ENCODE measurements at regions of chr6 and their contacts with region 1.

Region 1: DNA sequence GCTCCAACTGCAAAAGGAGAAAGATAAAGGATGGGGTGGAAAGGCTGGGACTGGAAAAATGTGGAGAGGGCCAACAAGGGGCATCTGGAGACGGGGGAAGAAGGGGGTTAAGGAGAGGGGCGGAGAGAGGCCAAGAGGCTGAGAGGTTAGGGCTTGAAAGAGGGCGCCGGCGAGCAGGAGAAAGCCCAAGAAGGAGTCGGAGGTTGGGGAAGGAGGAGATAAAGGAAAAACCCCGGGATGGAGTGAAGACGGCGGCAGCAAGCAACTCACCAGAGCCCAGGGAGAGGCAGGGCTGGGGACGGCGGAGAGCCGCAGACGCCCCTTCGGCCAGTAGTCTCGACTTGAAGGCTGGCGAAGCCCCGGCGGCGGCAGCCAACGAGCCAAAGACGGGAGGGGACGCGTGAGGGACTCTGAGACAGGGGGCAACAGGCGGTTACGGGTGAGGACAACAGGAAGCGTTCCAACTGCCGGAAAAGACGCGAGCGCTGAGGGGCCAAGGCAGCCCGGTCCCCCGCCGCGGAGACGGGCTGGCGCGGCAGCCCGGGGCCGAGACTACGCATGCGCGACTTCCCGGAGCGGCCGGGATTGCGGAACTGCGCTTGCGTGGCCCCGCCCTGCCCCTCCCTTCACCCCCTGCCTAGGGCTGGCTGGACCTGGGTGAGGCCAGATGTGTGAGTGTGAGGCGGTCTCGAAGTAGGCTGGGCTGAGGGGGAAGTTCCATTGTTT is at the start of gene STK38:
- DNase-seq: peak; percentile 94
- ATAC-seq: peak; percentile 90
- H3K4me3 Mint-ChIP-seq: peak within 1 kb of the TSS; percentile 96
- H3K27ac Mint-ChIP-seq: peak within 1 kb of the TSS; percentile 97
- H3K4me1 Mint-ChIP-seq: peaks cover 34% of the 10 kb centered on the region
- H3K27me3 Mint-ChIP-seq: no peaks in the 10 kb centered on the region
- CTCF ChIP-seq: no peak
- total RNA-seq, gene STK38: 22.9 to 23.4 TPM

Region 2: GRCh38 chr6:36104836-36105235 is 442.2 kb before region 1 on chr6:
- CTCF ChIA-PET with region 1: no interaction called
- POLR2A ChIA-PET with region 1: no interaction called
- intact Hi-C with region 1: no loop called
- DNase-seq: no peak
- ATAC-seq: no peak
- H3K4me3 Mint-ChIP-seq: no peak overlapping the region
- H3K27ac Mint-ChIP-seq: no peak overlapping the region
- H3K4me1 Mint-ChIP-seq: peaks cover 54% of the 10 kb centered on the region
- H3K27me3 Mint-ChIP-seq: no peaks in the 10 kb centered on the region
- CTCF ChIP-seq: no peak

Region 3: DNA sequence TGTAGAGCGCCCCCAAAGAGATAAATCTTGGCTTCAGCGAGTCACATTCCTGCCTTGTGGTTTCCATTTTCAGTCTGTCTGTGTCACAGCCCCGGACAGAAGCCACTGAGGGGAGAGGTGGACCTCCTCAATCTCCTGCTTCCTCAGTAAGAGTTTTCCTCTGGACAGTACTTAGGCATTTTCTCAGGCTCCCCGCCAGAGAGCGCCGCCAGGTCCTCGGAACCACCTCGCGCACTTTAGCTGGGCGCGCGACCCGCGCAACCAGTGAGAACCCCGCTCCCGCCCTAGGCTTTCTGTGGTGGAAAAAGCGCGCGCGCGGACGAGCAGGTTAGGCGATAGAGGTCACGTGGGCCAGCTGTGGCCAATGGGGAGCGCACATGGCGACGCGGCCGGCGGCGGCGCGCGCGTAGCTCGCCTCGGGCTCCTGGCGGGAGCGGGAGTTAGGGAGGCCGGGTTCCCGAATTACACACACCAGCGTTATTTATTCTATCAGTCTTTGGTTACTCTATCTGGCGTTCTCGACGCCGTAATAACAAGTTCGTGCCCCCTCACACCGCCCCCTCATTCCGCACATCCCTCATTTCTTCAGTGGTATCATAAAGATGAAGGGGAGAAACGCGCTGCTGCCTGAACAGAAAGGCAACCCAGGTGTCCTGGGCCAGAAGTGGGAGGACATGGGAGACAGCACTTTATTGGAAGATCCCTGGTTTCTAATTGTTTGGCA is 123.8 kb before region 1 on chr6:
- CTCF ChIA-PET with region 1: interaction called, 3 read pairs
- POLR2A ChIA-PET with region 1: interaction called, 3 read pairs
- intact Hi-C with region 1: loop called (anchors 5 kb)
- DNase-seq: peak; percentile 99
- ATAC-seq: peak; percentile 96
- H3K4me3 Mint-ChIP-seq: peak overlapping the region; percentile 77
- H3K27ac Mint-ChIP-seq: peak overlapping the region; percentile 89
- H3K4me1 Mint-ChIP-seq: peaks cover 11% of the 10 kb centered on the region
- H3K27me3 Mint-ChIP-seq: no peaks in the 10 kb centered on the region
- CTCF ChIP-seq: peak; percentile 67

Region 4: DNA sequence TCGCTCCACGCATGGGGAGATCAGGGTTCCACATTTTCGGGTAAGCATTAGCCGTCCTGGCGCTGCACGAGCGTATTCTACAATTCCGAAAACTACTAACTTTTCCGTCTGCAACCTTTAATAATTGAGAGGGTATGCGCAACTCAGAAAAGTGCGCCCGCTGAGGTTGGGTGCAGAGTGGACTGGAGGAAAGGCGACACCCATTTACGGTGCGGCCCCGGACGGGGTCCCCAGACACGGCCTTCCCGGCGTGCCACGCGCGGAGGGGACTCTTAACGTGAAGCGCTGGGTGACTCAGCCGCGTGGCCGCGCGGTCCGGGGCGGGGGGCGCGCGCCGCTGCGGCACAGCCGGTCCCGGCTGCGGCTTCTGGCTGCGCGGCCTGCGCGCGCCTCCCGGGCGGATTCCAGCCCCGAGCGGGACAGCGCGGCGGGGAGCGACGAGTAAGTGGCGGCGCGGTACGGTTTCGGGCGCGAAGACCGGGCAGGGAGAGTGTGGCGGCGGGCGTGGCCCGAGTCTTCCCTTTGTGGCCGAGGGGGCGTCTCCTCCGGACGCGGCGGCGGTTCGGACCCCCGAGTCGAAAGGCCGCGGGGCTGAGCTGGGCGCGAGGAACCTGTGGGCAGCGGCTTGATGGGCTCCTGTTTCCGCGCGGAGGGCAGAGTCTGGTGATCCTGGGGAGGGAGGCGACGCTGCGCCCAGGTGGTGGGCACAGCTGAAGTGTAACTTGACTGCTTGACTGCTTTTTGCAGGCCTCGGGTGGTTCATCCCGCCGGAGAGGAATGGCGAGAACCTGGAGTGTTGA is 104.2 kb before region 1 on chr6 and contains the starts of genes KCTD20 and PXT1:
- CTCF ChIA-PET with region 1: no interaction called
- POLR2A ChIA-PET with region 1: interaction called, 5 read pairs
- intact Hi-C with region 1: loop called (anchors 10 kb)
- DNase-seq: peak; percentile 94
- ATAC-seq: peak; percentile 83
- H3K4me3 Mint-ChIP-seq: peak within 1 kb of the TSS; percentile 97
- H3K27ac Mint-ChIP-seq: peak within 1 kb of the TSS; percentile 98
- H3K4me1 Mint-ChIP-seq: peaks cover 40% of the 10 kb centered on the region
- H3K27me3 Mint-ChIP-seq: no peaks in the 10 kb centered on the region
- CTCF ChIP-seq: no peak
- total RNA-seq, gene KCTD20: 42.7 to 45.1 TPM
- total RNA-seq, gene PXT1: 0.22 to 0.36 TPM

Region 5: GRCh38 chr6:36594029-36594815 is 47.1 kb after region 1 on chr6 and contains the start of gene SRSF3:
- CTCF ChIA-PET with region 1: no interaction called
- POLR2A ChIA-PET with region 1: interaction called, 30 read pairs
- intact Hi-C with region 1: loop called (anchors 5 kb)
- DNase-seq: peak; percentile 97
- ATAC-seq: peak; percentile 89
- H3K4me3 Mint-ChIP-seq: peak within 1 kb of the TSS; percentile 86
- H3K27ac Mint-ChIP-seq: peak within 1 kb of the TSS; percentile 96
- H3K4me1 Mint-ChIP-seq: peaks cover 21% of the 10 kb centered on the region
- H3K27me3 Mint-ChIP-seq: no peaks in the 10 kb centered on the region
- CTCF ChIP-seq: no peak
- total RNA-seq, gene SRSF3: 402 to 404 TPM

Region 6: GRCh38 chr6:36599791-36600209 is 52.7 kb after region 1 on chr6:
- CTCF ChIA-PET with region 1: no interaction called
- POLR2A ChIA-PET with region 1: interaction called, 30 read pairs
- intact Hi-C with region 1: loop called (anchors 5 kb)
- DNase-seq: peak; percentile 91
- ATAC-seq: peak; percentile 88
- H3K4me3 Mint-ChIP-seq: peak overlapping the region; percentile 86
- H3K27ac Mint-ChIP-seq: peak overlapping the region; percentile 85
- H3K4me1 Mint-ChIP-seq: peaks cover 61% of the 10 kb centered on the region
- H3K27me3 Mint-ChIP-seq: no peaks in the 10 kb centered on the region
- CTCF ChIP-seq: no peak